CD8-positive, alpha-beta T cell (primary cell): ENCODE measurements at regions of chr6 and their contacts with region 1.

Region 1: DNA sequence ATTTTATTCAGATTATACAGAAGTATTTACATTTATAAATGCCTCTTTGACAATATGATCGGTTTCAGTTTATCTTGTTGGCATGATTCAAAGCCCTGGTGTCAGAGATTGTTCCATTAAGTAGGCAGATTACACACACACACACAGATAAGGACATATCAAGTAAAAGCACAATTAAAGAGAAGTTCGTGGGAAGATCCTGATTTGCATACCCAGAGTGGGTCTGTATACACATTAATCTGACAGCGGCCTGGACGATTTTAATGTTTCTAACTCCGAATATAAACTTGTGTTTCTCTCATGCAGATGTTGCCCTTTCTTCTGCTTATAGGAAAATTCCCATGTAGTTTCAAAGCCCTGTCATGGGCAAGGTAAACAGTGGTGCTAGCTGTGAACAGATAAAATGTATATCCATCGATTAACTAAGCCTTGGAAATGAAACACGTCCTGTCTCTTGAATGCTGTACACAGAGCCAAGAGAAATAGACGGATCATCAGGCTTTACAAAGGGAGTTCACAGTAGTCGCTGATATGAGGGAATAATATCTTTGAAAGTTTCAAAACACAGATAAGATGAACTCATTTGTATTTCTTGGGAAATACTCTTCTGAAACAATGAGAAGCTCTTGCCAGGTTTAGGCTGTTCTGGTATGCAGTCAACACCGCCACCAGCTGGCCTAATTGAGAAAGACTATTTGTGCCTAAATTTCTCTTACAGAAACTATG is 108.2 kb upstream of the GMDS start:
- DNase-seq: peak; percentile 10 to 62 (median 48)
- ATAC-seq: no peak
- H3K4me3 ChIP-seq: no peak overlapping the region
- H3K4me3 Mint-ChIP-seq: no peak overlapping the region
- H3K27ac ChIP-seq: no peak overlapping the region
- H3K27ac Mint-ChIP-seq: no peak overlapping the region
- H3K4me1 ChIP-seq: no peaks in the 10 kb centered on the region
- H3K4me1 Mint-ChIP-seq: no peaks in the 10 kb centered on the region
- H3K27me3 ChIP-seq: no peaks in the 10 kb centered on the region
- H3K27me3 Mint-ChIP-seq: no peaks in the 10 kb centered on the region
- CTCF ChIP-seq: peak; percentile 75

Region 2: GRCh38 chr6:2196079-2196679 is 157.4 kb before region 1 on chr6:
- CTCF ChIA-PET with region 1: interaction called, 3 read pairs
- POLR2A ChIA-PET with region 1: no interaction called
- intact Hi-C with region 1: loop called (anchors 1 to 5 kb)
- DNase-seq: peak in 4 of 9 experiments; percentile 26 to 68 (median 51)
- ATAC-seq: peak; percentile 72
- H3K4me3 ChIP-seq: no peak overlapping the region
- H3K4me3 Mint-ChIP-seq: no peak overlapping the region
- H3K27ac ChIP-seq: no peak overlapping the region
- H3K27ac Mint-ChIP-seq: no peak overlapping the region
- H3K4me1 ChIP-seq: no peaks in the 10 kb centered on the region
- H3K4me1 Mint-ChIP-seq: peaks cover 3% of the 10 kb centered on the region
- H3K27me3 ChIP-seq: no peaks in the 10 kb centered on the region
- H3K27me3 Mint-ChIP-seq: no peaks in the 10 kb centered on the region
- CTCF ChIP-seq: peak; percentile 86